PC-9 (cell line): ENCODE measurements at regions of chr19 and their contacts with region 1.

Region 1: GRCh38 chr19:7535035-7535992 is at the start of gene PNPLA6:
- DNase-seq: peak; percentile 87 to 92
- H3K4me3 ChIP-seq: peak within 1 kb of the TSS; percentile 83
- H3K27ac ChIP-seq: peak within 1 kb of the TSS; percentile 76; the same call in 1 of the 2 replicates
- H3K4me1 ChIP-seq: peaks cover 9% of the 10 kb centered on the region
- H3K27me3 ChIP-seq: no peaks in the 10 kb centered on the region
- CTCF ChIP-seq: no peak
- total RNA-seq, gene PNPLA6: 121 and 139 TPM in 2 replicates

Region 2: GRCh38 chr19:7460562-7460966 is 74.8 kb before region 1 on chr19:
- CTCF ChIA-PET with region 1: no interaction called
- POLR2A ChIA-PET with region 1: no interaction called
- intact Hi-C with region 1: loop called (anchors 2 kb)
- DNase-seq: peak; percentile 92 to 99
- H3K4me3 ChIP-seq: peak overlapping the region; percentile 32; the same call in 1 of the 2 replicates
- H3K27ac ChIP-seq: peak overlapping the region; percentile 98
- H3K4me1 ChIP-seq: peaks cover 36% of the 10 kb centered on the region
- H3K27me3 ChIP-seq: no peaks in the 10 kb centered on the region
- CTCF ChIP-seq: no peak

Region 3: GRCh38 chr19:7522072-7522922 is 13.0 kb before region 1 on chr19 and contains the start of gene MCOLN1:
- CTCF ChIA-PET with region 1: no interaction called
- POLR2A ChIA-PET with region 1: no interaction called
- intact Hi-C with region 1: loop called (anchors 1 kb)
- DNase-seq: peak; percentile 91 to 98
- H3K4me3 ChIP-seq: peak within 1 kb of the TSS; percentile 89
- H3K27ac ChIP-seq: no peak within 1 kb of the TSS
- H3K4me1 ChIP-seq: peaks cover 16% of the 10 kb centered on the region
- H3K27me3 ChIP-seq: no peaks in the 10 kb centered on the region
- CTCF ChIP-seq: no peak
- total RNA-seq, gene MCOLN1: 10.4 and 16.0 TPM in 2 replicates